ENCODE measurements at regions of chr22 and their contacts with region 1.

Region 1: GRCh38 chr22:50698546-50699207 is 26.1 kb downstream of the SHANK3 start:
- DNase-seq: no peak
- ATAC-seq: no peak
- H3K4me3 ChIP-seq: no peak overlapping the region
- H3K4me3 Mint-ChIP-seq: no peak overlapping the region
- H3K27ac ChIP-seq: no peak overlapping the region
- H3K27ac Mint-ChIP-seq: no peak overlapping the region
- H3K4me1 ChIP-seq: peaks cover 0 to 5% of the 10 kb centered on the region in 2 experiments
- H3K4me1 Mint-ChIP-seq: peaks cover 14 to 19% (median 15%) of the 10 kb centered on the region in 3 donors
- H3K27me3 ChIP-seq: peaks cover 0 to 35% of the 10 kb centered on the region in 2 experiments
- H3K27me3 Mint-ChIP-seq: peaks cover 0 to 3% of the 10 kb centered on the region in 2 donors

Region 2: DNA sequence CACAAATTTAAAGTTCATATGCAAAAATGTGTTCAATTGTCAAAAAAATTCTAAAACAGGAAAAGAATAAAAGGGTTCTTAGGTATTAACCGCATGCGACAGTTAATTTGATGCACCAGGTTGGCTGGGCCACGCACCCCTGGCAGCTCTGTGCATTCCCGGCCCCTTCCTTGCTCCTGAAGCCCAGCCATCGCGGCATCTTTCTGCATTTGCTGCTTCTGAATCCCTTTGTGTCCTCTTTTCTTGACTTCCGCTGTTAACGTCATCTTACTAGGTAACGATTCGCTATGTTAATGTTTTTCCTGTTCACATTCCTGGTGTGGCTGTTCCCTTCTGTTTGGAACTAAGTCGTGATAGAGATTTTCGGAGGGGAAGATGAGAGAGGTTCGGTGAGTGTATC is 160.9 kb before region 1 on chr22:
- CTCF ChIA-PET with region 1: no interaction called
- POLR2A ChIA-PET with region 1: interaction called in 1 of 2 experiments, 10 read pairs
- DNase-seq: no peak
- ATAC-seq: no peak
- H3K4me3 ChIP-seq: no peak overlapping the region
- H3K4me3 Mint-ChIP-seq: peak overlapping the region; percentile 9 to 50 (median 25)
- H3K27ac ChIP-seq: peak overlapping the region; percentile 98
- H3K27ac Mint-ChIP-seq: peak overlapping the region; percentile 82 to 99
- H3K4me1 ChIP-seq: peaks cover 6 to 23% of the 10 kb centered on the region in 2 experiments
- H3K4me1 Mint-ChIP-seq: peaks cover 47 to 69% (median 64%) of the 10 kb centered on the region in 3 donors
- H3K27me3 ChIP-seq: no peaks in the 10 kb centered on the region
- H3K27me3 Mint-ChIP-seq: no peaks in the 10 kb centered on the region